HAP-1 (cell line): ENCODE measurements at regions of chr3 and their contacts with region 1.

Region 1: DNA sequence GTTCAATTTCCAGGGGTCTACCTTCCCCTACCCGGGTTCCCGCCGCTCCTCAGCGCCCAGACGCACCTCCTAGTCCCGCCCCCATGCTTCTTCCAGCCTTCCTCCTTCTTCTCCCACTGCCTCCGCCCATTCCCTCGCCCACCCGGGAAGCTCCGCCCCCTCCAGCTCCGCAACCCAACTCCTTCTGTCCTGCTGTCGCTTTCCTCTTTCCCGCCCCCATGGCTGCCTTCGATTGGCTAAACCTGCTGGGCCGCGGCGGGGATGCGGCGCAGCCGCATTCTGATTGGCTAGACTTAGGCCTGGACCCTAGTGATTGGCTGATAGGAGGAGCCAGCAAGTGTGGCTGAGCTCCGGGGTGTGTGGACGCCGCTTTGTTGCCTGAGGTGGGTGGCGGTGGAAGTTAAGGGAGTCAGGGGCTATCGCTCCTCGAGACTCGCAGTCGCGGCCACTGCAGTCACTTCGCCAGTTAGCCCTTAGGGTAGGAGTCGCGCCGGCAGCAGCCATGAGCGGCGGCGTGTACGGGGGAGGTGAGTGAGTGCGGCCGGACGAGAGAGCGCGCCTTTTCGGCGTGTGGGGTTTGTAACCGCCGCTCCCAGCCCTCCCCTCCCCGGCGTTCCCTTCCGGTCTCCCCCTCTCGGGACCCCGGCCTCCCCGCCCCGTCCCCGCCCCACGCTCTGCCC is at the start of gene ACTL6A:
- DNase-seq: peak; percentile 98 to 100
- H3K4me3 ChIP-seq: peak within 1 kb of the TSS; percentile 94
- H3K4me1 ChIP-seq: peaks cover 6% of the 10 kb centered on the region
- H3K27me3 ChIP-seq: no peaks in the 10 kb centered on the region

Region 2: DNA sequence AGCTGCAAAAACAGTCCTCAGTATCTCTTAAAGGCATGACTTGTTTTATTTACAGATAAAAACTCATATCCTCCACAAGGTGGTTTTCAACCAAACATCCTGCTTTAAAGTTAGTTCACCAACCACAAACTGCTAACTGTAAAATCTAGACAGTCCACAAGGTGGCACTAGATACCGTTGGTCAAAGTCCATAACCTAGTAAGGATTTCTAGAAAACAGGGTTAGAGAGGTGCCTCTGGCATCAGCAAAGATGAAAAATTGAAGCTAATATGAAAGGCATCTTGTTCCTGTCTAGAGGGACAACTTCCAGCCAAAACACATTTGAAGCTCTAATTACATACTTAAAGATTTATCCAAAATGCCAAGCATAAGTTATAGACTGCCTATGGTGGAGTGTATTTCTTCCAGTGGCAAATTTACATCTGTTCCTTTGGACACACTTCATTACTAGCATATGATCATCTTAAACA is 547.1 kb before region 1 on chr3:
- in situ Hi-C with region 1: loop called (anchors 10 kb)
- DNase-seq: peak; percentile 73 to 74
- H3K4me3 ChIP-seq: no peak overlapping the region
- H3K4me1 ChIP-seq: peaks cover 14% of the 10 kb centered on the region
- H3K27me3 ChIP-seq: no peaks in the 10 kb centered on the region

Region 3: GRCh38 chr3:179260949-179261765 is 301.6 kb before region 1 on chr3:
- in situ Hi-C with region 1: no loop called
- DNase-seq: no peak
- H3K4me3 ChIP-seq: no peak overlapping the region
- H3K4me1 ChIP-seq: no peaks in the 10 kb centered on the region
- H3K27me3 ChIP-seq: no peaks in the 10 kb centered on the region

Region 4: DNA sequence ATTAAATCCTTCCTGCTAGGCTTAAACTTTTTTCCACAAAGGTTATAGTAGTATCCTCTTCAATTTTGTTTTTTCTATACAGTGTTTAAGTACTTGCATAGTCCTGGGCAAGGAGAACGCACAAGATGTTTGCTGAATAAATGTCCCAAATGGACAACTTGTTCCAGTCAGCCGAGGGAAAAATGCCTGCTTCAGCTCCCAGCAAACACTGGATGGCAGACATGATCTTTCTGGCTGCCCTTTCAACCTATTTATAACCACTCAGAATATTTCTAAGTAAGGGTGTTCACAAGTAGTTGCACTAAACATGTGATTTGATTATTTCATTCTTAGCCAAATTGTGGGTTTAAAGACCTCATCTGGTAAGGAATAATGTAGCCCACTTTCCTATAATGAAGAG is 141.2 kb before region 1 on chr3:
- in situ Hi-C with region 1: loop called (anchors 10 kb)
- DNase-seq: no peak
- H3K4me3 ChIP-seq: no peak overlapping the region
- H3K4me1 ChIP-seq: no peaks in the 10 kb centered on the region
- H3K27me3 ChIP-seq: no peaks in the 10 kb centered on the region

Region 5: DNA sequence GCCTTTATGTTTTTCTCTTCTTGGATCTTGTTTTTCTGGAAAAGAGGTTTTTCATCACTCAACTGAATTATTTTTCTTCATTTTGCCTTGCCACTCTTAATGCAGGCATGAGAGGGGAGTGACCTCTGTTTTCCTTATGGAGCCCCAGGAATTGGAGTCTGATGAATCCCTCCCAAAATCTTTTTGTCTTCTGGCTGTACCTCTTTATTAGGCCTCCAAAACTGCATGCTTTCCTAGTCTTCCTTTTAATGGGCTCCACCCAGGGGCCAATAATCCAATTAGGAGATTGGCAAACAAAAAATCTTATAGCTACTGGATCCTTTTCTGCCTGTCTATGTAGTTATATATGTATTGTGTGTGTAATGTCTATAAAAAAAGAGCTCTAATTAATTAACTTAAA is 666.4 kb after region 1 on chr3:
- in situ Hi-C with region 1: no loop called
- DNase-seq: no peak
- H3K4me3 ChIP-seq: no peak overlapping the region
- H3K4me1 ChIP-seq: no peaks in the 10 kb centered on the region
- H3K27me3 ChIP-seq: no peaks in the 10 kb centered on the region